Activated CD4-positive, alpha-beta T cell treated with anti-CD3 and anti-CD28 coated beads for 36 hours (primary cell): ENCODE measurements at regions of chrX and their contacts with region 1.

Region 1: GRCh38 chrX:54999717-55000598 is at the start of gene APEX2:
- DNase-seq: peak; percentile 92
- ATAC-seq: peak; percentile 96
- H3K4me3 Mint-ChIP-seq: peak within 1 kb of the TSS; percentile 94
- H3K27ac Mint-ChIP-seq: peak within 1 kb of the TSS; percentile 94
- H3K4me1 Mint-ChIP-seq: peaks cover 21% of the 10 kb centered on the region
- H3K27me3 Mint-ChIP-seq: no peaks in the 10 kb centered on the region
- total RNA-seq, gene APEX2: 37.7 to 41.4 TPM

Region 2: DNA sequence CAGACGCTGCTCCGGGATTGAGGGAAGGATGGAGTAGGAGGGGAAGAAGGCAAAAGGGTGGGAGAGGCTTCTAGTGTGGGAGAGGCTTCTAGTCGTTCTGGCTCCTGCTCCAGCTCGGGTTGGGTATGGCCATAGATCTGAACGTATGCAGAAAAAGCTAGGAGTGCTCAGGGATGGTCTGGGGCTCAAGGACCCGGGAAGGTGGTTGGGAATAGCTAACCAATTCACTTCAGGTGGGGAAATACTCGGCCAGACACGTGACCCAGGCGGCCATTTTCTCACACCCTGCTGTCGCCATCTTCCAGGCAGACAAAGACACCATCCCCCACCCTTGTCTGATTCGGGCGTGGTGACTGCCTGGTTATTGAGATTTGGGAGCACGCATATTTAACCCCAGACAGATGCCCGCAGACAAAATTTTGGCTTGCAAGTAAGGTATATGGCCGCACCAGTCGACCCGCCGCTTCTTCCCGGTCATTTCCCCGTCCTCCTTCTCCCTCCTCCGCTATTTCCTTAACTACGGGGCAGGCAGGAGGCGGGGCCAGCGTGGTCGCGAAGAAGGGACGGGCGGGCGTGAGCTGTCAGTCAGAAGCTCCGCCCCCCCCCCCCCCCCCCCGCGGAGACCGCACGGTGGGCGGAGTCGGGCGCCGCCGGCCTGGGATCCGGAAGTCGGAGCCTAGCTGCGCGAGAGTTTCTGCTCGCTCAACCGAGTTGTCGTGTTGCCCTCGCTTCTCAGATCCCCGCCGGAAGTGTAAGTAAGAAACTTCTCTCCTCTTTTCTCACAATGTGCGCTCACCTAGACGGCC is 470.2 kb before region 1 on chrX and contains the start of gene GNL3L:
- CTCF ChIA-PET with region 1: no interaction called
- POLR2A ChIA-PET with region 1: no interaction called
- intact Hi-C with region 1: loop called in 1 of 2 experiments (anchors 1 kb)
- DNase-seq: peak; percentile 89
- ATAC-seq: peak; percentile 88
- H3K4me3 Mint-ChIP-seq: peak within 1 kb of the TSS; percentile 90
- H3K27ac Mint-ChIP-seq: peak within 1 kb of the TSS; percentile 90
- H3K4me1 Mint-ChIP-seq: peaks cover 26% of the 10 kb centered on the region
- H3K27me3 Mint-ChIP-seq: no peaks in the 10 kb centered on the region
- total RNA-seq, gene GNL3L: 62.5 to 62.8 TPM

Region 3: GRCh38 chrX:54921427-54922021 is 78.4 kb before region 1 on chrX:
- CTCF ChIA-PET with region 1: interaction called, 3 read pairs
- POLR2A ChIA-PET with region 1: no interaction called
- intact Hi-C with region 1: loop called in 1 of 2 experiments (anchors 5 kb)
- DNase-seq: peak; percentile 77
- ATAC-seq: peak; percentile 88
- H3K4me3 Mint-ChIP-seq: peak overlapping the region; percentile 79
- H3K27ac Mint-ChIP-seq: peak overlapping the region; percentile 73
- H3K4me1 Mint-ChIP-seq: peaks cover 11% of the 10 kb centered on the region
- H3K27me3 Mint-ChIP-seq: no peaks in the 10 kb centered on the region